ENCODE measurements at regions of chr19 and their contacts with region 1.

Region 1: GRCh38 chr19:4186087-4186993 is 3.9 kb downstream of the ANKRD24 start:
- DNase-seq: peak; percentile 58
- ATAC-seq: peak; percentile 76
- H3K4me3 ChIP-seq: no peak overlapping the region
- H3K27ac ChIP-seq: no peak overlapping the region
- H3K4me1 ChIP-seq: 0 out of 2 replicates have a peak, but pooled peaks cover 1% of the 10 kb centered on the region
- H3K27me3 ChIP-seq: no peaks in the 10 kb centered on the region; the same call in 1 of the 2 replicates
- CTCF ChIP-seq: peak; percentile 77
- POLR2A ChIP-seq: no peak
- RAD21 ChIP-seq: peak; percentile 60

Region 2: DNA sequence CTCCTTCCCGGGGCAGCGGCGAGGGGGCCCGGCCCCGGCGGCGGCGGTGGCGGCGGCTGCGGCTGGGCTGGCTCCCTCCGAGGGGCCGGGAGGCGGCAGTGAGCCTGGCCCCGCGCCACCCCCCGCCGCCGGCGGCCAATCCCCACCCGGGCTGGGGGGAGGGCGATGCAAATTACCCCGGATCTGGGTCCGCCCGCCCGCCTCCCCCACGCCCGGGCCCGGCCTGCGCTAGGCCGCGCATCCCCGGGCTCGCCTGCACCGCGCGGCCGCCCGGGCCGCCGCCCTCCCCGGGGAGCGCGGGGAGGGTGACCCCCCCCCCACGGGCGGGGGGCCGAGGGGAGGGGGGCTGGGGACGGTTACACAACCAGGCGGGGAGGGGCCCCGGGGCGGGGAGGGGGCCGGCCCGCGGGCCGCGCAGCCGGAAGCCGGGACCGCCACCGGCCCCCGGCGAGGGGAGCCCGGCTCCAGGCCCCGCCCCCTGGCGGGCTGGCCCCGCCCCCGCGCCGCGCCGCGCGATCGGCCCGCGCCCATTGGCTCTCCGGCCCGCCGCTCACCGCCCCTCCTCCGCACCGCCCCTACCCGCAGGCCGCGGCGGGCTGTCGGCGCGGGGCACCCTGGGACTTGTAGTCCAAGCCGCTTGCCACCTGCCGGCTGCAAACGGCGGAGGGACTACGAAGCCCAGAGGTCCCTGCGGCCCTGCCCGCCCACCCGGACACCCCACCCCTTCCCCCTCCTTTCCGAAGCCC is 120.7 kb before region 1 on chr19:
- CTCF ChIA-PET with region 1: no interaction called
- POLR2A ChIA-PET with region 1: no interaction called
- dilution Hi-C with region 1: no loop called
- in situ Hi-C with region 1: no loop called
- intact Hi-C with region 1: loop called (anchors 5 kb)
- DNase-seq: peak; percentile 98
- ATAC-seq: peak; percentile 84
- H3K4me3 ChIP-seq: peak overlapping the region; percentile 83
- H3K27ac ChIP-seq: no peak overlapping the region; the same call in 1 of the 2 replicates
- H3K4me1 ChIP-seq: peaks cover 20% of the 10 kb centered on the region
- H3K27me3 ChIP-seq: no peaks in the 10 kb centered on the region
- CTCF ChIP-seq: no peak
- POLR2A ChIP-seq: peak; percentile 19; the same call in 1 of the 2 replicates
- RAD21 ChIP-seq: no peak